Vagina (tissue), 2 donors: ENCODE measurements at regions of chr1 and their contacts with region 1.

Region 1: GRCh38 chr1:66084442-66084841 is 291.7 kb downstream of the PDE4B start:
- DNase-seq: no peak
- H3K4me3 ChIP-seq: no peak overlapping the region
- H3K27ac ChIP-seq: no peak overlapping the region
- H3K4me1 ChIP-seq: no peaks in the 10 kb centered on the region
- H3K27me3 ChIP-seq: no peaks in the 10 kb centered on the region
- CTCF ChIP-seq: no peak
- POLR2A ChIP-seq: no peak

Region 2: DNA sequence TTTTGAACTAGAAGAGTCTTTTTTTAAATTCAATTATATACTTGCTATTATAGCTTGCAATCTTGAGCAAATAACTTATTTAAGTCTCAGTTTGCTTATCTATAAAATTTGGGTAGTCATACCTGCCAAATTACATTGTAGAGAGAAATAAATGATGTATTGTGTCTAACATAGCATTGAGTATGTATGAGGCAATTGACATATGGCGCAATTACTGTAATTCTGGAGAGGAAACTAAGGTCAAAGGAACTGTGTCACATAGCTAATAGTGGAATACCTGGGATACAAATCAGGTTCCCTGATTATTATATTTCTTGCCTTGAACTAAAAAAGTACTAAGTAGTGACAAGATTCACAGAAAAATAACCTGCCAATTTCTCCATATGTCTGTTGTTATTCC is 10.7 kb after region 1 on chr1:
- intact Hi-C with region 1: loop called (anchors 2 kb)
- DNase-seq: no peak
- H3K4me3 ChIP-seq: no peak overlapping the region
- H3K27ac ChIP-seq: no peak overlapping the region
- H3K4me1 ChIP-seq: no peaks in the 10 kb centered on the region
- H3K27me3 ChIP-seq: no peaks in the 10 kb centered on the region
- CTCF ChIP-seq: no peak
- POLR2A ChIP-seq: no peak